ENCODE measurements at regions of chr1 and their contacts with region 1.

Region 1: DNA sequence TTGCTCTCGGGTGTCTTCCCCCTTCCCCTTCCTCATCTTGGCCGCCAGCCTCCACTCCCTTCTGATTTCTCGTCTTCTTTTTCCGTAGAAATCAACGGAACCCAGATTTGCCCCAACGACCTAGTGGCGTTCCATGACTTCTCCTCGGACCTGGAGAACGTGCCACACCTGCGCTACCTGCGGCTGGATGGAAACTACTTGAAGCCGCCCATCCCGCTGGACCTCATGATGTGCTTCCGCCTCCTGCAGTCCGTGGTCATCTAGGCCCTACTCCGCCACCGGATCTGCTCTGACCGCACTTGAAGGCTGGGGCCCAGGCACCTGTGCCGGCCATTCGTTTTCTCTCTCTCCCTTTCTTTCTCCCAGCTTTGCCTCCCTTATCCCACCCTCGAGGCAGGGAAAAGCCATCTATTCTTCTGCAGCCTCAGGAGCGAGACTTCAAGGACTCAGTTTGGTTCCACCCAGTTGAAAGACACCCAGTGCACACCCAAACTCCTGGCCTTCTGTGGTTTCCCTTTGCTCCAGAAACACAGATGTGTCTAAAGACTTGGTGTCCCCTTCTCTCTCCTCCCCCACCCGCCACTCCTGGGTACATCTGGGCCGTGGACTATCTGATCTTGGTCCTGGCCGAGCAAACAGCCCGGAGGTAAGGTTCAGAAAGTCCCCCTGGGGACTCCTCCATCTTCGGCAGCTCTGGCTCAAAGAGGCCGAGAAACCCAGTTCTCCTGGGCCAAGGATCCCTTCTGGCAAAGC is 7.2 kb upstream of the OPTC start:
- DNase-seq: no peak
- H3K4me3 ChIP-seq: peak overlapping the region in 34 of 59 donors; percentile 31 to 68 (median 55)
- H3K27ac ChIP-seq: peak overlapping the region in 54 of 59 donors; percentile 10 to 88 (median 68)
- H3K27me3 ChIP-seq: no peaks in the 10 kb centered on the region
- CTCF ChIP-seq: no peak

Region 2: GRCh38 chr1:203316626-203317093 is 170.1 kb before region 1 on chr1:
- intact Hi-C with region 1: no loop called
- DNase-seq: no peak
- H3K4me3 ChIP-seq: no peak overlapping the region
- H3K27ac ChIP-seq: peak overlapping the region in 10 of 59 donors; percentile 10 to 46 (median 25)
- H3K27me3 ChIP-seq: no peaks in the 10 kb centered on the region
- CTCF ChIP-seq: no peak

Region 3: GRCh38 chr1:203346060-203346768 is 140.6 kb before region 1 on chr1:
- intact Hi-C with region 1: loop called in 1 of 2 experiments (anchors 2 kb)
- DNase-seq: no peak
- H3K4me3 ChIP-seq: no peak overlapping the region
- H3K27ac ChIP-seq: peak overlapping the region in 4 of 59 donors; percentile 23 to 48 (median 40)
- H3K27me3 ChIP-seq: no peaks in the 10 kb centered on the region
- CTCF ChIP-seq: peak in 2 of 56 donors; percentile 7 to 15

Region 4: DNA sequence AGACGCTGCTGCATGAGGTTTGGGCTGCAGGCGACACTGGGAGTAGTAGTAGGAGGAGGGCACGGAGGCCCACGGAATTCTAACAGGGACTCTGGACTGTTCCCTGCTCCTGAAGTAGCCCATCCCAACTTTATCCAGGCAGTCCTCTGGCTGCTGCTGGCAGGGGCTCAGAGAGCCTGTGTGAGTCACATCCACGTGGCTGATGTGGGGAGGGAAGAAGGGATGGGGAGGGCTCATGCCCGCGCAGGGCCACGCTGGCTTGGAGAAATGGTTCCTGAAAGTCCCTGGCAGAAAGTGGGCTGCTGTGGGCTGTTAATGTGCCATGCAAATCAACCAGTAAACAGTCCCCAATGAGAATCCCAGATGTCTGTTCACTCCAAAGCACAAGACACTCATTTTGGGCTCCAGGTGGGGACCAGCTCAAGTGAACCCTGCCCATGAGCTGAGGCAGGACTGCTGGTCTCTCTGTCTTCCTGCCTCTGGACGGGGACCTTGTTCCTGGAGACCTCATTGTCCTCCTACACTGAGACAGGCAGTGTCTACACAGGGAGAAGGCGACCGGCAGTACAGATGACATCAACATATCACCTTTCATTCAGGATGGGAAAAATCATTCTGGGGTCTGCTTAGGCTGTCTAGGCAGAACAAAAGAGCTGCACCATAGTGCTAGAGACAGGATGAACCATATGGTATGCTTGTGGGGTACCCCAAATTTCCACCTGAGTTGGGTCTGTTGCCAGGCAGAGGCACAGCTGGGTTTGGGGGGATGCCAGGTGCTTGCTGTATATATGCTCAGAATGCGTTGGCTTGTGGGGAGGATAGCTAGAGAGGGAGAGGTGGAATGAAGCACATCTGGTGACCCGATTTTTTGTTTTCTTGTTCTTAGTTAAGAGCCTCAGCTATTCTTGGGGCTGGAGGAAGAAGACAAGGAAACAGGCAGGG is 78.0 kb before region 1 on chr1:
- intact Hi-C with region 1: loop called in 1 of 2 experiments (anchors 5 kb)
- DNase-seq: peak; percentile 38 to 94 (median 84)
- H3K4me3 ChIP-seq: peak overlapping the region in 6 of 59 donors; percentile 5 to 37 (median 14)
- H3K27ac ChIP-seq: peak overlapping the region in 56 of 59 donors; percentile 1 to 87 (median 67)
- H3K27me3 ChIP-seq: no peaks in the 10 kb centered on the region
- CTCF ChIP-seq: peak in 3 of 56 donors; percentile 12 to 30 (median 15)

Region 5: GRCh38 chr1:203440771-203441170 is 46.0 kb before region 1 on chr1:
- intact Hi-C with region 1: loop called (anchors 5 kb)
- DNase-seq: peak; percentile 64 to 83 (median 76)
- H3K4me3 ChIP-seq: no peak overlapping the region
- H3K27ac ChIP-seq: peak overlapping the region in 40 of 59 donors; percentile 1 to 78 (median 44)
- H3K27me3 ChIP-seq: no peaks in the 10 kb centered on the region
- CTCF ChIP-seq: peak in 55 of 56 donors; percentile 17 to 84 (median 68)